ENCODE measurements at regions of chr15 and their contacts with region 1.

Region 1: GRCh38 chr15:78241007-78241406 is 6.6 kb upstream of the ACSBG1 start:
- DNase-seq: peak; percentile 83 to 94
- ATAC-seq: peak; percentile 95 to 98
- H3K4me3 ChIP-seq: no peak overlapping the region
- H3K27ac ChIP-seq: no peak overlapping the region
- H3K4me1 ChIP-seq: no peaks in the 10 kb centered on the region
- CTCF ChIP-seq: peak; percentile 94
- EP300 ChIP-seq: no peak
- POLR2A ChIP-seq: no peak
- RAD21 ChIP-seq: peak; percentile 96 to 99

Region 2: GRCh38 chr15:77959432-77959879 is 281.6 kb before region 1 on chr15:
- CTCF ChIA-PET with region 1: interaction called, 70 read pairs
- POLR2A ChIA-PET with region 1: no interaction called
- DNase-seq: peak; percentile 76 to 96
- ATAC-seq: peak; percentile 95 to 100
- H3K4me3 ChIP-seq: peak overlapping the region; percentile 20; the same call in 2 of the 3 replicates
- H3K27ac ChIP-seq: peak overlapping the region in 1 of 2 experiments; percentile 67; a peak in 3 of 6 replicates
- H3K4me1 ChIP-seq: no peaks in the 10 kb centered on the region
- CTCF ChIP-seq: peak; percentile 95
- EP300 ChIP-seq: no peak
- POLR2A ChIP-seq: no peak
- RAD21 ChIP-seq: peak; percentile 97 to 98

Region 3: GRCh38 chr15:78120523-78120922 is 120.5 kb before region 1 on chr15:
- CTCF ChIA-PET with region 1: interaction called, 251 read pairs
- POLR2A ChIA-PET with region 1: no interaction called
- DNase-seq: no peak
- ATAC-seq: no peak
- H3K4me3 ChIP-seq: no peak overlapping the region
- H3K27ac ChIP-seq: no peak overlapping the region
- H3K4me1 ChIP-seq: no peaks in the 10 kb centered on the region
- CTCF ChIP-seq: no peak
- EP300 ChIP-seq: no peak
- POLR2A ChIP-seq: no peak
- RAD21 ChIP-seq: no peak

Region 4: DNA sequence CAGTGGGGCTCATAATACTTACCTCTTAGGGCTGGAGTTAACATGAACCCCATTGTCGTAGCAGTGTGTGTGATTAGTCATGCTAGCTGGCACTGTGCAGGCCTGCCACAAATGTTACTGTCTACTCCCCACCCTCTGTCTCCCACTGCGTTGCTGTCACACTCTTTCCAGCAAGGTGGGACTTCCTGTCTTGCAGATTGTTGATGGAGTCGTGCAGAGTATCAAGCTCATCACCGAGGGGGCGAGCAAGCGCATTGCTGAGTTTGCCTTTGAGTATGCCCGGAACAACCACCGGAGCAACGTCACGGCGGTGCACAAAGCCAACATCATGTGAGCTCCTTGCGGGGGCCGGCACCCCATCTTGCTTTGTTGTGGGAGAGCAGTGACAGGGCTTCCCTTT is 79.0 kb before region 1 on chr15:
- CTCF ChIA-PET with region 1: interaction called, 38 read pairs
- POLR2A ChIA-PET with region 1: no interaction called
- DNase-seq: no peak
- ATAC-seq: no peak
- H3K4me3 ChIP-seq: no peak overlapping the region
- H3K27ac ChIP-seq: no peak overlapping the region
- H3K4me1 ChIP-seq: no peaks in the 10 kb centered on the region; the same call in 2 of the 3 replicates
- CTCF ChIP-seq: no peak
- EP300 ChIP-seq: no peak
- POLR2A ChIP-seq: no peak
- RAD21 ChIP-seq: no peak

Region 5: DNA sequence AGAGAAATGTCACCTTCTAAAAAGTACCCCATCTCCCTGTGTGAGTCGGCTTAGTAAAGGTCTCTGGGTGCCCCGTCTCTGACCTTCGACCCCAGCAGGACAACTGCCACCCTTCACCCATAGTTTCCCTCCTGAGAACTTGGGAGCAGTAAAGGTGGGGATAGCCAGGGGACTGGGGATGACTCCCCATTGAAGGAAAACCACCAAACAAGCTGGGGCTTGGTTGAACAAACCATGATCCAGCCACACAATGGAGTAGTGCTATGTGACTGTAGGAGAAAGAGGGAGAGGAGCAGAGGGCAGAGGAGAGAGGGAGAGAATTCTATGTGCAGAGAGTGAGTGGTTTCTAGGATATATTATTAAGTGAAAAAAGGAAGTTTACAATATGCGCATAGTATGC is 58.2 kb before region 1 on chr15:
- CTCF ChIA-PET with region 1: interaction called, 274 read pairs
- POLR2A ChIA-PET with region 1: no interaction called
- DNase-seq: no peak
- ATAC-seq: no peak
- H3K4me3 ChIP-seq: no peak overlapping the region
- H3K27ac ChIP-seq: no peak overlapping the region
- H3K4me1 ChIP-seq: no peaks in the 10 kb centered on the region
- CTCF ChIP-seq: no peak
- EP300 ChIP-seq: no peak
- POLR2A ChIP-seq: no peak
- RAD21 ChIP-seq: no peak

Region 6: DNA sequence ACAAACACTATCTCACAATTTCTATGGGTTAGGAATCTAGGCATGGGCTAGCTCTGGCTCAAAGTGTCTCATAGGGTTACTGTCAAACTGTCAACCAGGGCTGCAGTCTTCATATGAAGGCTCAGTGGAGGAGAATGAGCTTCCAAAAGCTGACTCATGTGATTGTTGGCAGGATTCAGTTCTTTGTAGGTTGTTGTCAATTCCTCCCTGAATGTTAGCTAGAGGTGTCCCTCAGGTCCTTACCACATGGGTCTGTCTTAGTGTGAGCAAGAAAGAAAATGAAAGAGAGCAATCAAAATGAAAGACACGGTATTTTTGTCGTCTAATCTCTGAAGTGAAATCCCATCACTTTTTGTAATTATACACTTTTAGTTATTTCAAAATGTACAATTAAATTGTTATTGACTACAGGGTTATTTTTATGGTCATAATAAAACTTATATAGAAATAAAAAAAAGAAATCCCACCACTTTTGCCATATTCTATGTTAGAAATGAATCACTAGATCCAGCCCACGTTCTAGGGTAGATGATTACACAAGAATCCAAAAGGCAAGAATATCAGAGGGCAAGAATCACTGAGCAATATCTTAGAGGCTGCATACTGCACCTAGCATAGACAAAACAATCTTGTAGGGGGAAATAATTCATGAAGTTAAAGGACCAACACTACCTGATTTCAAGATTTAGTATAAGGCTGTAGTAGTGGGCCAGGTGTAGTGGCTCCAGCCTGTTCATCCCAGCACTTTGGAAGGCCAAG is 15.0 kb before region 1 on chr15:
- CTCF ChIA-PET with region 1: interaction called, 93 read pairs
- POLR2A ChIA-PET with region 1: no interaction called
- DNase-seq: no peak
- ATAC-seq: no peak
- H3K4me3 ChIP-seq: no peak overlapping the region
- H3K27ac ChIP-seq: no peak overlapping the region
- H3K4me1 ChIP-seq: no peaks in the 10 kb centered on the region
- CTCF ChIP-seq: no peak
- EP300 ChIP-seq: no peak
- POLR2A ChIP-seq: no peak
- RAD21 ChIP-seq: no peak

Region 7: GRCh38 chr15:78536134-78536533 is 295.1 kb after region 1 on chr15:
- CTCF ChIA-PET with region 1: no interaction called
- POLR2A ChIA-PET with region 1: no interaction called
- DNase-seq: no peak
- ATAC-seq: no peak
- H3K4me3 ChIP-seq: no peak overlapping the region
- H3K27ac ChIP-seq: no peak overlapping the region
- H3K4me1 ChIP-seq: 0 out of 3 replicates have a peak, but pooled peaks cover 3% of the 10 kb centered on the region
- CTCF ChIP-seq: no peak
- EP300 ChIP-seq: no peak
- POLR2A ChIP-seq: no peak
- RAD21 ChIP-seq: no peak

Region 8: DNA sequence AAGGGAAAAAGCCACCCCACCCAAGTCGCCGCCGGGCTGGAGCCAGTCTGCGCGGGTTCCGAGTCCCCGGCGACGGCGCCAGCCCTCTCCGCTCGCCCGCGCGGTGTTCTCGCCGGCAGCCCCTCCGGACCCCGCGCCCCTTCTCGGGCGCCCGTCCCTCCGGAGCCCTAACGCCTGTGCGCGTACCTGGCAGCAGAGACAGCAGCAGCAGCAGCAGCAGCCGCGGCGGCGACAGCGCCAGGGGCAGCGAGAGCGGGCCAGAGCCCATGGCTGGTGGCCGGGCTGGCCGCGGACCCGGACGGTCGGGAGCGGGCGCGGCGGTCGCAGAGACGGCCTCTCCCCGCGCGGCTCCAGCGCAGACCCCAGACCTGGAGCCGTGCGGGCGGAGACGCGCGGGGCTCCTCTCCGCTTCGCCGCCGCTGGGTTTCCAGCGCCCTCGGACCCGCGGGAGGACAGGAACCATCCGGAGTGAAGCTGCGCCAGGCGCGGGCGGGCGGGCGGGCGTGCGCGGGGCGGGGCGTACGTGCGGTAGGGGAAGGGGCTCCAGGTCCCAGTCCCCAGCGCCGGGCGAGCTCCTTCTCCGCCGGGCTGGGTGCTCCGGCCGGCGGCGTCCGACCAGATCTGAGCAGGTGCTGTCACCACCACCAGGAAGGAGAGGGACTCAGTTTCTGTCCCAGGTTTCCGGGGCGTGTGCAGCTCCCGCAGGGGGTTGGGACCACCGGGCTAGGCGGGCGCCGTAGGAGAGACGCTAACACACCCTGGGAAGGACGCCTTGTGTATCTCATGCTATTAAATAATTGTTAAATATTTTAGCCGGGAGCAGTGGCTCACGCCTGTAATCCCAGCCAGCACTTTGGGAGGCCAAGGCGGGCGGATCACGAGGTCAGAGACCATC is 379.8 kb after region 1 on chr15 and contains the start of gene CHRNA3:
- CTCF ChIA-PET with region 1: no interaction called
- POLR2A ChIA-PET with region 1: no interaction called
- DNase-seq: no peak
- ATAC-seq: peak; percentile 27 to 50; a peak in 5 of 6 replicates
- H3K4me3 ChIP-seq: peak within 1 kb of the TSS; percentile 51
- H3K27ac ChIP-seq: peak within 1 kb of the TSS in 1 of 2 experiments; percentile 57; a peak in 3 of 6 replicates
- H3K4me1 ChIP-seq: peaks cover 14% of the 10 kb centered on the region; the same call in 2 of the 3 replicates
- CTCF ChIP-seq: no peak
- EP300 ChIP-seq: no peak
- POLR2A ChIP-seq: no peak
- RAD21 ChIP-seq: no peak
- polyA plus RNA-seq, gene CHRNA3: 0.45 and 0.50 TPM in 2 replicates